ENCODE measurements at regions of chr10 and their contacts with region 1.

Region 1: DNA sequence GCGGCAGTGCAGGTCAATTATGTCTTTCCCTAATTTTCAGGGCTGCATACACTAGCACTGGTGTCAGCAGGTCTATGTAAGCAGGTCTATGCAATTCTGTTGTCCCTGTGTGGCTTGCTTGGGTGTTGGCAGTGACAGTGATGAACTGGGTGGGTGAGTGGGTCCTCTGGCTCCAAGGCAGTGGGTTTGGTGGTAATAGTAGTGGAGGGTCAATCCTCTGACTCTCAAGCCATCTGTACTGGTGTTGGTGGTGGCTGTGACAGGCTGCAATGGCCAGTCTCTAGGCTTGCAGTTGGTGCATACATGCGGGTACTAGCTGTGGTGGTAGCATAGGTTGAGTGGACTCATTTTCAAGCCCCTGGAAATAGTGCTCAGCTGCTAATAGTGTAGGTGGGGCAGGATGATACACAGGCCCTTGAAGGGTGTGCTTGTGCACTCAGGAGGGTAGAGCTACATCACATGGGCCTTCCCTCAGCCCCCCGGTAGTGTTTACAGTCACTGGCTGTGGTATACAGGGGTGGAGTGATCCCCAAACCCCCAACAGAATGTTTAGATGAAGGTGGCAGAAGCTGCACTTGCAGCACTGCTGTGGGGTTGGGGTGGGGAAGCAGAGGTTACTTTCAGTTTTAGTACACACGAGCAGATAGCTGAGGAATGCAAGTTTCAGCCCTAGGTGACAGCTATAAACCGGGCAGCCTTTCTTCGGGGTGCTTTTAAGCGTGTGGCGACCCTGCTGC is 331.3 kb downstream of the PCDH15 start:
- DNase-seq: no peak
- ATAC-seq: no peak
- H3K4me3 ChIP-seq: no peak overlapping the region
- H3K27ac ChIP-seq: no peak overlapping the region
- H3K4me1 ChIP-seq: no peaks in the 10 kb centered on the region
- H3K27me3 ChIP-seq: no peaks in the 10 kb centered on the region
- CTCF ChIP-seq: no peak

Region 2: DNA sequence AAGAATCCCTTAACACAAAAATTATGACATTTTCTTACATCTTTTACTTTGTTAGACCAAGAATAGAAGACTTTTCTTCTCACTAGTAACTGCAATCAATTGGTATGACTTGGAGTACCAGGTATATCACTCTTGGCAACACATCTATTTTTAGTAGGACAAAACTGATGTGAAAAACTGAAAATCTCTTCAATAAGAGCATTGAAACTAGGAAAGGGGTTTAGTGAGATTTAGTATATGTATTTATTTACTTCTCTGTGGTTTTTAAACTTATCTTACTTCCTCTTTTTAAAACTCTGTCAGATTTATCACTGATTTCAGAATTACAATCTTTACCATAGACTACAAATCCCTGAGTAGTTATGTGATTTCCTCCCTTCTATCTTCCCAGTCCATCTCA is 35.0 kb before region 1 on chr10:
- CTCF ChIA-PET with region 1: no interaction called
- POLR2A ChIA-PET with region 1: interaction called, 10 read pairs
- in situ Hi-C with region 1: no loop called
- intact Hi-C with region 1: no loop called
- DNase-seq: no peak
- ATAC-seq: no peak
- H3K4me3 ChIP-seq: no peak overlapping the region
- H3K27ac ChIP-seq: no peak overlapping the region
- H3K4me1 ChIP-seq: no peaks in the 10 kb centered on the region
- H3K27me3 ChIP-seq: no peaks in the 10 kb centered on the region
- CTCF ChIP-seq: no peak

Region 3: DNA sequence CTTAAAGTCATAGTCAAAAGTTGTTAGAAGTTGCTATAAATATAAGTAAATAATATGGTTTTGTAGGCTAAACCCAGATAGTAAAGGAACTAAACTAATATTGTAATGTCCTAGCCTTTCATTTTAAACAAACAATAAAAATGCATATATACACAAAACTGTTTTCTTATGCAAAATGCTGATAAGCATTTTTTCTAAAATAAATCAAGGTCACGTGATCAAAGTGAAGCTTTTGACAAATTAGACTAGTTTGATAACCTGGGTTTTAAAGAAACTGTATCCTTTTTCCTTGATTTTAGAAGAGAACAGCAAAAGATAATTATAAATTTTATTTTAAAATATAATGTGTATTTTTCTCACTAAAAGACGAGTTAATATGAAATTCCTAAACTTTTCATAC is 18.0 kb after region 1 on chr10:
- CTCF ChIA-PET with region 1: no interaction called
- POLR2A ChIA-PET with region 1: no interaction called
- in situ Hi-C with region 1: no loop called
- intact Hi-C with region 1: no loop called
- DNase-seq: no peak
- ATAC-seq: no peak
- H3K4me3 ChIP-seq: no peak overlapping the region
- H3K27ac ChIP-seq: no peak overlapping the region
- H3K4me1 ChIP-seq: no peaks in the 10 kb centered on the region
- H3K27me3 ChIP-seq: no peaks in the 10 kb centered on the region
- CTCF ChIP-seq: no peak

Measured in Panc1 (cell line).